SK-N-SH (cell line): ENCODE measurements at regions of chr9 and their contacts with region 1.

Region 1: GRCh38 chr9:104780799-104781395 is 17.0 kb downstream of the NIPSNAP3B start:
- DNase-seq: no peak
- H3K4me3 ChIP-seq: no peak overlapping the region
- H3K27ac ChIP-seq: no peak overlapping the region
- H3K4me1 ChIP-seq: no peaks in the 10 kb centered on the region; a peak in 1 of 4 replicates
- H3K27me3 ChIP-seq: no peaks in the 10 kb centered on the region
- CTCF ChIP-seq: peak; percentile 77
- EP300 ChIP-seq: no peak
- RAD21 ChIP-seq: peak; percentile 87

Region 2: GRCh38 chr9:104802110-104802509 is 21.2 kb after region 1 on chr9:
- CTCF ChIA-PET with region 1: interaction called, 31 read pairs
- POLR2A ChIA-PET with region 1: no interaction called
- DNase-seq: no peak
- H3K4me3 ChIP-seq: no peak overlapping the region
- H3K27ac ChIP-seq: no peak overlapping the region; a peak in 1 of 4 replicates
- H3K4me1 ChIP-seq: peaks cover 0 to 40% of the 10 kb centered on the region in 2 experiments; a peak in 2 of 4 replicates
- H3K27me3 ChIP-seq: no peaks in the 10 kb centered on the region
- CTCF ChIP-seq: no peak
- EP300 ChIP-seq: no peak
- RAD21 ChIP-seq: no peak